A549 (cell line): ENCODE measurements at regions of chr11 and their contacts with region 1.

Region 1: GRCh38 chr11:33742249-33742851 is 6.1 kb upstream of the CD59 start:
- DNase-seq: no peak
- ATAC-seq: peak; percentile 76 to 82; a peak in 4 of 6 replicates
- H3K4me3 ChIP-seq: no peak overlapping the region
- H3K27ac ChIP-seq: peak overlapping the region; percentile 16; a peak in 2 of 6 replicates
- H3K4me1 ChIP-seq: peaks cover 21% of the 10 kb centered on the region
- CTCF ChIP-seq: peak; percentile 77
- EP300 ChIP-seq: no peak
- POLR2A ChIP-seq: no peak
- RAD21 ChIP-seq: peak; percentile 73 to 86

Region 2: DNA sequence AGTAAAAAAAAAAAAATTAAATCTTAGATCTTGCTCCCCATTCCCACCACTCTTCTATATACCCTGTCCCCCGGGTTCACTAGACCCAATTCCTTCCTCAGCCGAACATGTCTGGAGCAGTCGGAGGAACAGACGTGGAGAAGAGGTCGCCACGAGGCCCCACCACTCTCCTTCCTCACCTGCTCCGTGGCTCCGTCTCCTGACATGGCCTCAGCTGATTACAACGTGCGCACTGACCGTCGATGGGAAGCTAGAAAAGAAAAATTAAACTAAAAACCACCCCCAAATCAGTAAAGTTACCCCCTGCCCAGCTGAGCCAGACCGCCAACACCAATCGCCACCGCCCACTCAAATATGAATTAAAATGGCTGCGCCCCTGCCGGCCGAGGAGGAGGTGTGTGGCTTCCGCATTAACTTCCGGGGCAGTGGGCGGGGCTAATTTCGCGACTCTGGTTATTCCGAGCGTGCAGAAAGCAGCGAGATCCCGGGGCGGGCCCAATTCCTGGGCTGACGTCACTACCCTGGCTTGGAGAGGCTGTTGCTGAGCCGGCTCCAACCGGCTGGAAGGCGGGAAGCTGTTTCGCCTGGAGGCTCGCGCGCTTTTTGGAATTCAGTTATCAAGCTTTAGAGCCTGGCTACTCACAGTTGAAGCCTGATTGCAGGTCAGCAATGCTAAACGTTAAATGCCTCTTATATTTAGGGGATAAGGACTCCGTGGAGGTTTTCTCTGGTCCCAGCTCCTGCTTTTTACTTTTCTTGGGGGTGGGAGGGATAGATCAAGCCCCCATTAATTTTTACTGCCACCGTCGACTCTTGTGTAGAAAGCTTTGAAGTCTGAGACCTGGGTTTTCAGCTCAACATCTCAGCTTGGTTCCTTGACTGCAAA is 581.0 kb before region 1 on chr11 and contains the start of gene CSTF3:
- CTCF ChIA-PET with region 1: interaction called, 18 read pairs
- POLR2A ChIA-PET with region 1: no interaction called
- DNase-seq: peak; percentile 92 to 99
- ATAC-seq: peak; percentile 97 to 98
- H3K4me3 ChIP-seq: peak within 1 kb of the TSS; percentile 77
- H3K27ac ChIP-seq: peak within 1 kb of the TSS; percentile 85 to 87
- H3K4me1 ChIP-seq: peaks cover 36% of the 10 kb centered on the region
- CTCF ChIP-seq: no peak
- EP300 ChIP-seq: no peak
- POLR2A ChIP-seq: peak; percentile 43
- RAD21 ChIP-seq: no peak
- polyA plus RNA-seq, gene CSTF3: 41.4 and 53.9 TPM in 2 replicates

Region 3: DNA sequence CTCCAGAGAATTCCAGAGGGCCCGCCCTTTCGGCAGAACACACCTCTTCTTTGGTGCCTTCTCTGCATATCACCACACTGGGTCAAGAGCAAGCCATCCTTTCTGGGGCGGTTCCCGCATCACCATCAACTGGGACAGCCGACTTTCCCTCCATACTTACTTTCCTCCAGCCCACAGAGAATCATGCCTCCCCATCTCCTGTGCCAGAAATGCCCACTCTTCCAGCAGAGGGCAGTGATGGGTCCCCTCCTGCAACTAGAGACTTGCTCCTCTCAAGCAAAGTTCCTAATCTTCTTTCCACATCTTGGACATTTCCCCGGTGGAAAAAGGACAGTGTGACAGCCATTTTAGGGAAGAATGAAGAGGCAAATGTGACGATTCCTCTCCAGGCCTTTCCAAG is 199.4 kb before region 1 on chr11:
- CTCF ChIA-PET with region 1: interaction called, 15 read pairs
- POLR2A ChIA-PET with region 1: no interaction called
- DNase-seq: peak; percentile 55 to 86
- ATAC-seq: peak; percentile 81 to 95; a peak in 5 of 6 replicates
- H3K4me3 ChIP-seq: no peak overlapping the region
- H3K27ac ChIP-seq: no peak overlapping the region
- H3K4me1 ChIP-seq: no peaks in the 10 kb centered on the region
- CTCF ChIP-seq: peak; percentile 68
- EP300 ChIP-seq: no peak
- POLR2A ChIP-seq: no peak
- RAD21 ChIP-seq: peak; percentile 71 to 77

Region 4: DNA sequence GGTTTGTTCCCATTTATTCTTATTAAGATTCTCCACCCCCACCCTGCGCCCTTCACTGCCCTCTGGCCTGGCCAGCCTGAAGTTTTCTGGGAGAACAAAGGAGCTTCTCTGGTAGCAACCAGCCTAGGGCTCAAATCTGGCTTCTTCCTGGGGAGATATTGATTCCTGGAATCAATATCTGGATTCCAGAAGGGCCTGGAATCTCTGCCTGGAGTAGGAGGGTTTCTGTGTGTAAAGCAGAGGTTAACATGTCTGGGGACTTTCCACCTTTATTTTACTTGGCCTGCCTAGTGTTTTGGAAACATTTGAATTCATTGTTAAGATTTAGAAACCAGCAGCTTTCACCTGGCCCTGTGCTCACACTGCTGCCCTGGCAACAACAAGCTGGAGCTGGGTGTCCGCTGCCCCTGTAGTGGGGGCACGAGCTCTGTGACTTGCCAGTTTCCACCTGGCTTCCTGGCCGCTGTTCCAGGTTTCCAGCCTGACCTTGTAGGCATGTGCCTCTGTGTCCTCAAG is 47.2 kb before region 1 on chr11:
- CTCF ChIA-PET with region 1: interaction called, 45 read pairs
- POLR2A ChIA-PET with region 1: interaction called, 42 read pairs
- DNase-seq: no peak
- ATAC-seq: no peak
- H3K4me3 ChIP-seq: no peak overlapping the region
- H3K27ac ChIP-seq: peak overlapping the region; percentile 94 to 96; a peak in 5 of 6 replicates
- H3K4me1 ChIP-seq: peaks cover 55% of the 10 kb centered on the region
- CTCF ChIP-seq: no peak
- EP300 ChIP-seq: no peak
- POLR2A ChIP-seq: no peak
- RAD21 ChIP-seq: no peak

Region 5: DNA sequence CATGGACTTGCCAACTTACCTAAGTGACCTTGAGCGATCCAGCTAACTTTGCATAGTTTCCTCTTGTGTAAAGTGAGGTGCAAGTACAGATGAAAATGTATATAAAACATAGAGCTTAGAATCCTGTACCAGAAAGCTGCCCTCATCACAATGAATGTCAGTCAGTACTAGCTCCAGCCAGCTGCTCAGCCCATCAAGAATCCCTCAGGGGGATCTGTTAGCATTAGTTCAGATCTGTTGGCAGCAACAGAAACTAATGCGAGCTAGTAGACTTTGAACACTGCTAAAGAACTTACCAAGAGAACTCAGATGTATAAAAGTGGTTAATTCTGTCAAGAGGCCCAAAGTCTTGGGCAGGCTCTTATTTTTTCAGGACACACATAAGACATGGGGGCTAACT is 35.4 kb before region 1 on chr11:
- CTCF ChIA-PET with region 1: interaction called, 24 read pairs
- POLR2A ChIA-PET with region 1: no interaction called
- DNase-seq: no peak
- ATAC-seq: no peak
- H3K4me3 ChIP-seq: no peak overlapping the region
- H3K27ac ChIP-seq: peak overlapping the region; percentile 15 to 53; a peak in 3 of 6 replicates
- H3K4me1 ChIP-seq: peaks cover 73% of the 10 kb centered on the region
- CTCF ChIP-seq: no peak
- EP300 ChIP-seq: no peak
- POLR2A ChIP-seq: no peak
- RAD21 ChIP-seq: no peak

Region 6: GRCh38 chr11:33722579-33723225 is 19.6 kb before region 1 on chr11:
- CTCF ChIA-PET with region 1: interaction called, 26 read pairs
- POLR2A ChIA-PET with region 1: no interaction called
- DNase-seq: peak in 1 of 2 experiments; percentile 58
- ATAC-seq: peak; percentile 39 to 47
- H3K4me3 ChIP-seq: no peak overlapping the region
- H3K27ac ChIP-seq: peak overlapping the region; percentile 80 to 90
- H3K4me1 ChIP-seq: peaks cover 62% of the 10 kb centered on the region
- CTCF ChIP-seq: no peak
- EP300 ChIP-seq: no peak
- POLR2A ChIP-seq: no peak
- RAD21 ChIP-seq: no peak

Region 7: GRCh38 chr11:33773987-33774735 is 31.8 kb after region 1 on chr11 and contains the start of gene FBXO3:
- CTCF ChIA-PET with region 1: interaction called, 19 read pairs
- POLR2A ChIA-PET with region 1: no interaction called
- DNase-seq: peak; percentile 79 to 88
- ATAC-seq: peak; percentile 88 to 90
- H3K4me3 ChIP-seq: peak within 1 kb of the TSS; percentile 90
- H3K27ac ChIP-seq: peak within 1 kb of the TSS; percentile 83 to 90
- H3K4me1 ChIP-seq: peaks cover 33% of the 10 kb centered on the region
- CTCF ChIP-seq: no peak
- EP300 ChIP-seq: no peak
- POLR2A ChIP-seq: peak; percentile 80
- RAD21 ChIP-seq: no peak
- polyA plus RNA-seq, gene FBXO3: 38.1 and 42.6 TPM in 2 replicates